ENCODE measurements at regions of chr6 and their contacts with region 1.

Region 1: DNA sequence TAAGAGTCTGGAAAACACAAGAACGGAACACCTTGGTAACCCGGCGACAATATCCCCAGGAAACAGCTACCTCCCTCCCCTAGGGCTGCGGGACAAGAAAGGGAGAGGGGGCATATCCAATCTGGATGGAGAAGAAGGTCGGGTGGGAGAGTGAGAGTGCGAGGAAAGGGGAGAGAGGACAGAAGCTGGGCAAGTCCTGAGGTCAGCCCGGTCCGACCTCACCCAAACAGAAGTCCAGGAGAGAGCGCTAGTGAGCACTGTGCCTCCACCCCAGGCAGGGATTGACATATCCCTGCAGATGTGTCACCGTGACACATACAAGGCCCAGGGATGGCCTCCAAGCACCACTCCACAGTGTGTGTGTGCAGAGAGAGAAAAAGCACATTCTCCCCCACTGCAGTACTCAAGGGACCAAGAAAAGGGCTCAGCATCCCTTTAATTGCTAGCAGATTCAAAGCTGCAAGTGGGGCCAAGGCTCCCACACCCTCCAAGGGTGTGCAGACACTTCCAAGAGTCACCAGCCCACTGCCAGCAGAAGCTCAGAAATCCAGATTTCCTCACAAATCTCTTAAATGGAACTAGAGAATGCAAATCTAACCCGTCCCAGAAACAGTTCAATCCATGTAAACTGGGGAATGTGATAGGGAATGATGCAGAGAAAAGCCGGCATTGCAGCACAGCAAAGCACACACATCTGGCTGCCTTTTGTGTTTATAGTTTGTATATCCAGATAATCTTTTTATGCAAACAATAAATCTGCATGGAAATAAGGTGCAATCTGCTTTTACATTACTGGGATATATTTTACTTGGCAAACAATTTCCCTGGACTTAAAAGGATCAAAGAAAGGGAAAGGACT is 3.1 kb downstream of the PXDC1 start:
- DNase-seq: no peak
- ATAC-seq: peak; percentile 60
- H3K4me3 ChIP-seq: no peak overlapping the region
- H3K27ac ChIP-seq: no peak overlapping the region
- H3K4me1 ChIP-seq: no peaks in the 10 kb centered on the region; the same call in none of the 2 replicates
- H3K27me3 ChIP-seq: peaks cover 8 to 22% of the 10 kb centered on the region in 2 experiments
- CTCF ChIP-seq: peak; percentile 53 to 72 (median 55)
- EP300 ChIP-seq: no peak
- POLR2A ChIP-seq: no peak
- RAD21 ChIP-seq: peak; percentile 62

Region 2: GRCh38 chr6:3410385-3411360 is 337.8 kb before region 1 on chr6:
- CTCF ChIA-PET with region 1: no interaction called
- POLR2A ChIA-PET with region 1: no interaction called
- RAD21 ChIA-PET with region 1: no interaction called
- SMC1A ChIA-PET with region 1: no interaction called
- in situ Hi-C with region 1: no loop called
- intact Hi-C with region 1: no loop called
- DNase-seq: no peak
- ATAC-seq: peak; percentile 93
- H3K4me3 ChIP-seq: no peak overlapping the region
- H3K27ac ChIP-seq: no peak overlapping the region
- H3K4me1 ChIP-seq: peaks cover 9% of the 10 kb centered on the region
- H3K27me3 ChIP-seq: no peaks in the 10 kb centered on the region
- CTCF ChIP-seq: peak; percentile 55 to 75 (median 73)
- EP300 ChIP-seq: no peak
- POLR2A ChIP-seq: no peak
- RAD21 ChIP-seq: peak; percentile 68

Region 3: GRCh38 chr6:3585320-3585928 is 163.0 kb before region 1 on chr6:
- CTCF ChIA-PET with region 1: no interaction called
- POLR2A ChIA-PET with region 1: no interaction called
- RAD21 ChIA-PET with region 1: no interaction called
- SMC1A ChIA-PET with region 1: no interaction called
- in situ Hi-C with region 1: no loop called
- intact Hi-C with region 1: no loop called
- DNase-seq: no peak
- ATAC-seq: no peak
- H3K4me3 ChIP-seq: no peak overlapping the region
- H3K27ac ChIP-seq: no peak overlapping the region
- H3K4me1 ChIP-seq: no peaks in the 10 kb centered on the region
- H3K27me3 ChIP-seq: no peaks in the 10 kb centered on the region
- CTCF ChIP-seq: no peak
- EP300 ChIP-seq: no peak
- POLR2A ChIP-seq: no peak
- RAD21 ChIP-seq: no peak

Region 4: GRCh38 chr6:3849681-3850450 is 101.4 kb after region 1 on chr6:
- CTCF ChIA-PET with region 1: interaction called, 7 read pairs
- POLR2A ChIA-PET with region 1: no interaction called
- RAD21 ChIA-PET with region 1: no interaction called
- SMC1A ChIA-PET with region 1: interaction called, 3 read pairs
- in situ Hi-C with region 1: no loop called
- intact Hi-C with region 1: loop called (anchors 5 kb)
- DNase-seq: no peak
- ATAC-seq: no peak
- H3K4me3 ChIP-seq: peak overlapping the region; percentile 62
- H3K27ac ChIP-seq: peak overlapping the region; percentile 35
- H3K4me1 ChIP-seq: peaks cover 15% of the 10 kb centered on the region
- H3K27me3 ChIP-seq: no peaks in the 10 kb centered on the region
- CTCF ChIP-seq: no peak
- EP300 ChIP-seq: no peak
- POLR2A ChIP-seq: no peak; the same call in 1 of the 2 replicates
- RAD21 ChIP-seq: no peak

Region 5: GRCh38 chr6:3887150-3887700 is 138.8 kb after region 1 on chr6:
- CTCF ChIA-PET with region 1: interaction called, 11 read pairs
- POLR2A ChIA-PET with region 1: no interaction called
- RAD21 ChIA-PET with region 1: interaction called, 4 read pairs
- SMC1A ChIA-PET with region 1: interaction called, 3 read pairs
- in situ Hi-C with region 1: no loop called
- intact Hi-C with region 1: no loop called
- DNase-seq: peak; percentile 1
- ATAC-seq: no peak
- H3K4me3 ChIP-seq: no peak overlapping the region
- H3K27ac ChIP-seq: no peak overlapping the region
- H3K4me1 ChIP-seq: no peaks in the 10 kb centered on the region
- H3K27me3 ChIP-seq: no peaks in the 10 kb centered on the region; a peak in 1 of 4 replicates
- CTCF ChIP-seq: peak; percentile 29 to 39 (median 35); a peak in 4 of 6 replicates
- EP300 ChIP-seq: no peak
- POLR2A ChIP-seq: no peak
- RAD21 ChIP-seq: peak; percentile 51

Region 6: GRCh38 chr6:3977875-3978711 is 229.7 kb after region 1 on chr6:
- CTCF ChIA-PET with region 1: interaction called, 74 read pairs
- POLR2A ChIA-PET with region 1: no interaction called
- RAD21 ChIA-PET with region 1: interaction called, 16 read pairs
- SMC1A ChIA-PET with region 1: interaction called, 22 read pairs
- in situ Hi-C with region 1: no loop called
- intact Hi-C with region 1: no loop called
- DNase-seq: peak; percentile 38
- ATAC-seq: peak; percentile 97
- H3K4me3 ChIP-seq: no peak overlapping the region
- H3K27ac ChIP-seq: no peak overlapping the region
- H3K4me1 ChIP-seq: no peaks in the 10 kb centered on the region
- H3K27me3 ChIP-seq: no peaks in the 10 kb centered on the region
- CTCF ChIP-seq: peak; percentile 59 to 71 (median 64); a peak in 5 of 6 replicates
- EP300 ChIP-seq: no peak
- POLR2A ChIP-seq: no peak
- RAD21 ChIP-seq: peak; percentile 50

Region 7: GRCh38 chr6:3990692-3991501 is 242.5 kb after region 1 on chr6:
- CTCF ChIA-PET with region 1: interaction called, 33 read pairs
- POLR2A ChIA-PET with region 1: no interaction called
- RAD21 ChIA-PET with region 1: interaction called, 4 read pairs
- SMC1A ChIA-PET with region 1: interaction called, 17 read pairs
- in situ Hi-C with region 1: loop called (anchors 5 kb)
- intact Hi-C with region 1: no loop called
- DNase-seq: no peak
- ATAC-seq: peak; percentile 97
- H3K4me3 ChIP-seq: no peak overlapping the region
- H3K27ac ChIP-seq: no peak overlapping the region
- H3K4me1 ChIP-seq: no peaks in the 10 kb centered on the region
- H3K27me3 ChIP-seq: no peaks in the 10 kb centered on the region
- CTCF ChIP-seq: peak; percentile 82 to 88 (median 85)
- EP300 ChIP-seq: no peak
- POLR2A ChIP-seq: no peak
- RAD21 ChIP-seq: peak; percentile 81